ENCODE measurements at regions of chrX and their contacts with region 1.

Region 1: DNA sequence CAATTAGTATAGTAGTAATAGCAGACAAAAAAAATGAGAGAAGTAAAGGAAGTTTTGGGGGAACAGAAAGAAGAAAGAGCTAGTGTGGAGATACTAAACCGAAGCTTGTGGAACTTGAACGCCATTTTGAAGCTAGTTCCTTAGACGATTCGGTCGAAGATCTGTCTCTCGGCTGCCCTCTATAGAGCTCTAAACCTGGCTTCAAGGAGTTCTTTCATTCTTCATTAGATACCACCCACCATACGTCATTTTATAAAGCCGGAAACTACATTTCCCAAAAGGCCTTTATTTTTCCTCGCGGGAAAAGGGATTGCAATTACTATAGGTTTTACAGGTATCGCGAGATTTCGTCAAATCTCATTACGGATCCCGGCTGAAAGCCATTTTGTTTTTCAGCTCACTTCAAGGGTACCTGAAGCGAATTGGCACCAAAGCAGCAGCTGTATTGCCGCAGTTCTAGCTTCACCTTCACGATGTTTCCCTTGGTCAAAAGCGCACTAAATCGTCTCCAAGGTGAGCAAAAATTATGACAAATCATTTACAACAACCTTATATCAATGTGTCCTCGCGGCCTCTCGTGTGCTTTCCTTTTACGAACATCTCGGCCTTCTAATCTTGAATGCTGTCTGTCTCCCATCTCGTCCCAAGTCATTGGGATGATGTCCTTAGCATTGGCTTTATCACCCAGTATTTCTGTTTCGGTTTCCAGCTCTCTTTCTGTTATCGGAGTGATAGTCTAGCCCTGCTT is at the start of gene COX7B:
- DNase-seq: peak in 5 of 10 donors; percentile 26 to 75 (median 55)
- H3K4me3 ChIP-seq: peak within 1 kb of the TSS; percentile 35 to 84 (median 68)
- H3K27ac ChIP-seq: peak within 1 kb of the TSS in 58 of 59 donors; percentile 47 to 93 (median 88)
- H3K27me3 ChIP-seq: peaks cover 0 to 9% (median 0%) of the 10 kb centered on the region in 45 donors
- CTCF ChIP-seq: peak in 55 of 56 donors; percentile 7 to 70 (median 53)
- total RNA-seq, gene COX7B: 118 to 334 (median 263) TPM

Region 2: GRCh38 chrX:77785486-77786364 is 113.5 kb before region 1 on chrX and contains the start of gene ATRX:
- intact Hi-C with region 1: loop called (anchors 5 to 10 kb)
- DNase-seq: peak; percentile 44 to 76 (median 64)
- H3K4me3 ChIP-seq: peak within 1 kb of the TSS; percentile 34 to 80 (median 64)
- H3K27ac ChIP-seq: peak within 1 kb of the TSS; percentile 71 to 97 (median 91)
- H3K27me3 ChIP-seq: peaks cover 0 to 27% (median 5%) of the 10 kb centered on the region in 45 donors
- CTCF ChIP-seq: no peak
- total RNA-seq, gene ATRX: 105 to 210 (median 142) TPM

Region 3: DNA sequence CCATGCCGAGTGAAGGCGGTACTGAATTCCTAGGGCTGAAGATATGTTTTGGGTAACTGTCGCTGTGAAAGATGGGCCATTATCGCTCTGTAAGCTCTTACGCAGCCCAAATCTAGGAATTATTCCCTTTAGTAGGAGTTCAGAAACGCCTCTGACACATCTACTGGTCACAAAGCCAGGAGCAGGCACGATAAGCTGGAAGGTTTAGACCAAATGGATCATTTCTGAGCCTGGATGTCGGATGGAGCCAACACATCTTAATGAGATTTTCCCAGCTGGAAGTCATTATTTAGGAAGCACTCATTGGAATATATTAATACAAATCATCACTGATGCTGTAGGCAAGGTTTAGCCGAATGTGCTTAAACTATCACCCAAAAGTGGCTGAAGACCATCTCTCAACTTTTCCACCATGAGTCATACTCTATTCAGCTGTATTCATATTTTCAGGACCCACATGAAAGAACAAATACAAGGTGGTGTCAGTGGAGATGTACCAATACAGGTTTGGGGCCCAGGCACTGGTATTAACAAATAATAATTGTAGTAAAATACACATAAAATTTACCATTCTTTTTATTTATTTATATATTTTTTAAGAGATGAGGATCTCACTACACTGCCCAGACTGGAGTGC is 79.0 kb before region 1 on chrX:
- intact Hi-C with region 1: no loop called
- DNase-seq: no peak
- H3K4me3 ChIP-seq: no peak overlapping the region
- H3K27ac ChIP-seq: no peak overlapping the region
- H3K27me3 ChIP-seq: peaks cover 0 to 40% (median 7%) of the 10 kb centered on the region in 45 donors
- CTCF ChIP-seq: no peak

Region 4: DNA sequence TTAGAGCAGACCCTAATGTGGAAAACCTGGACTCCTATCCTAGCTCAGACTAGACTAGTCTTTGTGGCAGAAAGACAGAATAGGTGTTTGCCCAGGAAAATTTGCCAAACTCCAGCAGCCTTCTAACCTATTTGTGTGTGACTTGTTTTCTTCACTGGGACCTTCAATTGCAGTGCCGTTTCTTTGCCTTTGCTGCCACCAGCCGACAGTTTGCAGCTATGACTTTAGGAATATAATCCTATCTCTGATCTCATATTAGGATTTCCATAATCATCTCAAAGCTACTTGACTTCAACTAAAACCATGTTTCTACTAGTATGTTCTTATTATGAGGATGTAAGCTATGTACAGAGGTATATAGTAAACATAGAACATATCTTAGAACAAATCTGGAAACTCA is 130.4 kb after region 1 on chrX:
- intact Hi-C with region 1: loop called in 1 of 2 experiments (anchors 10 kb)
- DNase-seq: peak in 7 of 10 donors; percentile 9 to 48 (median 39)
- H3K4me3 ChIP-seq: no peak overlapping the region
- H3K27ac ChIP-seq: no peak overlapping the region
- H3K27me3 ChIP-seq: peaks cover 0 to 56% (median 3%) of the 10 kb centered on the region in 45 donors
- CTCF ChIP-seq: peak in 53 of 56 donors; percentile 21 to 69 (median 48)